T-cell (primary cell): ENCODE measurements at regions of chr12 and their contacts with region 1.

Region 1: DNA sequence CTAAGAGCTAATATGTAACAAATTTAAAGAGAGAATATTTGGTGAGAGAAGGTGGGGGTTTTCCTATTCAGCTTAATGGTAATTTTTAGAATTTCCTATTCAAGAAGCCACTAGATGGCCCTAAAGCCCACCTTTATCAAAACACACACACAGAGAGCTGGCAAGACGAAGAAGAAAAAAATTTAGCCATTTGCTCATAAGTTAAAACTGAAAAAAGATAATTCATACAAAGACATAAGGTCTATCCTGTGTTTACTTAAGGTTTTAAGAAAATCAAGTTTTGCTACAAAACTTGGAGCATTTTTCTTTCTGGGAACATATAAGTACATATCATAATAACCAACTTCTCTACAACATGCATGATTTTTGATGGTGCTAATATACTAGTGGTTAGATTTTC is 46.8 kb upstream of the PCED1B start:
- DNase-seq: peak in 12 of 35 experiments; percentile 4 to 79 (median 16)
- ATAC-seq: peak; percentile 74 to 85 (median 80)
- H3K4me3 ChIP-seq: no peak overlapping the region
- H3K4me3 Mint-ChIP-seq: peak overlapping the region in 1 of 3 donors; percentile 32
- H3K27ac ChIP-seq: no peak overlapping the region
- H3K27ac Mint-ChIP-seq: peak overlapping the region in 1 of 2 donors; percentile 49
- H3K4me1 ChIP-seq: peaks cover 0 to 2% of the 10 kb centered on the region in 2 experiments
- H3K4me1 Mint-ChIP-seq: peaks cover 26 to 28% (median 28%) of the 10 kb centered on the region in 3 donors
- H3K27me3 ChIP-seq: no peaks in the 10 kb centered on the region
- H3K27me3 Mint-ChIP-seq: no peaks in the 10 kb centered on the region

Region 2: GRCh38 chr12:45543906-45544315 is 1488.7 kb before region 1 on chr12:
- CTCF ChIA-PET with region 1: no interaction called
- POLR2A ChIA-PET with region 1: no interaction called
- DNase-seq: peak in 30 of 35 experiments; percentile 5 to 81 (median 34)
- ATAC-seq: peak; percentile 58 to 97 (median 76)
- H3K4me3 ChIP-seq: no peak overlapping the region
- H3K4me3 Mint-ChIP-seq: no peak overlapping the region
- H3K27ac ChIP-seq: no peak overlapping the region
- H3K27ac Mint-ChIP-seq: no peak overlapping the region
- H3K4me1 ChIP-seq: no peaks in the 10 kb centered on the region
- H3K4me1 Mint-ChIP-seq: no peaks in the 10 kb centered on the region
- H3K27me3 ChIP-seq: peaks cover 0 to 7% of the 10 kb centered on the region in 2 experiments
- H3K27me3 Mint-ChIP-seq: peaks cover 0 to 3% of the 10 kb centered on the region in 2 donors

Region 3: DNA sequence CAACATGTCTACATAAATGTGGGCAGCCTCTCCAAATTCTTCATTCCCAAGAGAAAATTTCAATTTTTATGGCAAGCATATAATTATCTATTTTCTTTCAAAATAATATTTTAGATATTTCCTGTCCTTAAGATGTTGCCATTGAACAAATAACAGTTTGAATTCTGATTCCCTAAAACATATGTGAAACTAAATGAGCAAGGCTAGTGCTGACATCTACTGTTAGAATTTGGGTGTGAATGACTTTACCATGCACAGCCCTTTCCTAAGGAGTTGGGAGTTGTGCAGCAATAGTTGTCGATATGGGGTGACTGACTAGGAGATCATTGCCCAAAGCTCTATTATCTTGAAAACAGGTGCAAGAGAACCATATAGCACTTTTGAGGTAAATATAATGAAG is 98.7 kb before region 1 on chr12:
- CTCF ChIA-PET with region 1: no interaction called
- POLR2A ChIA-PET with region 1: no interaction called
- DNase-seq: peak in 1 of 35 experiments; percentile 40
- ATAC-seq: no peak
- H3K4me3 ChIP-seq: no peak overlapping the region
- H3K4me3 Mint-ChIP-seq: no peak overlapping the region
- H3K27ac ChIP-seq: no peak overlapping the region
- H3K27ac Mint-ChIP-seq: no peak overlapping the region
- H3K4me1 ChIP-seq: peaks cover 0 to 6% of the 10 kb centered on the region in 2 experiments
- H3K4me1 Mint-ChIP-seq: no peaks in the 10 kb centered on the region
- H3K27me3 ChIP-seq: peaks cover 0 to 3% of the 10 kb centered on the region in 2 experiments
- H3K27me3 Mint-ChIP-seq: peaks cover 11 to 27% of the 10 kb centered on the region in 2 donors

Region 4: DNA sequence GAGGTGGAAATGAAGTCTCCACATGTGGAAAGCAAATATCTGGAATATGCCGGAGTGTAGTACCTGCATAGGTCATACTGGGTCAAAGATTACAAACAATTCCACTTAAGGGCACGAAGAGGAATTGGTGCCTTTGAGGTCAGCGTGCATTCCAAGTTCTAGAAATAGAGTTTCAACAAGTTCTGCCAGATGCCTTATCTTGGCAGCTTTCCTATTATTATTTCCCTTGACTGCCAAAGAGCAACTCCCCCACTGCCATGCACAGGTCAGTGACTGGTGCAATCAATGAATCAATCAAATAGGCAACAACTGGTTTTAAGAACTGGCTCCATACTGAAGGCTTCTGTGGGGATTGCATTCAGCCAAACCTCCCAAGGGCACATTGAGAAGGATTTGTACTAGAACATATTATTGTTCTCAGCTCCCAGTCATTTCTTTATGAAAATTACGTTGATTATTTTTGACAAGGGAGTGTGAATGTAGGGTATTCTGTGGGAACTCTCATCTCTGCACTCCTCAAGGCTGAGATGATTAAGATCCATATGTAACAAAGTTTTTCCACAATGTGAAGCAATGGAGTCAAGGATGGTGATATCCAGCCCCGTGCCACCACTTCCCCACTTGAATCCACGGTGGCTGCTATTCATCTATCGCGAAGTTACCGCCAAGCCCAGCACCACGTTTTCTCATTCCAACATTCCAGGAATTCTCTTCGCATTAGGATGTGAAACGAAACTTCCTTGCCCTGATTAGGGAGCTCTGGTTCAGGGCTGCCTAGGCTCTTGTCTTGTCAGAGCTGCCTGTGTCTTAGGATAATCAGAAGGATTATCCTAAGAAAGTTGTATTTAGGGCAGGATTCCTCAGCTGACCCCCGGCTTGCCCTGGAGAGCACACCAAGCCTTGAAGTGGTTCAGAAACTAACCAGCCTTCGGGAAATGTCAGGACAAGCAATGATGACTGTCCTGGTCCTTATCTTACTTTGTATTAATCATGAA is 68.4 kb before region 1 on chr12:
- CTCF ChIA-PET with region 1: interaction called in 1 of 2 experiments, 12 read pairs
- POLR2A ChIA-PET with region 1: no interaction called
- DNase-seq: no peak
- ATAC-seq: no peak
- H3K4me3 ChIP-seq: no peak overlapping the region
- H3K4me3 Mint-ChIP-seq: no peak overlapping the region
- H3K27ac ChIP-seq: no peak overlapping the region
- H3K27ac Mint-ChIP-seq: no peak overlapping the region
- H3K4me1 ChIP-seq: no peaks in the 10 kb centered on the region
- H3K4me1 Mint-ChIP-seq: no peaks in the 10 kb centered on the region
- H3K27me3 ChIP-seq: peaks cover 0 to 5% of the 10 kb centered on the region in 2 experiments
- H3K27me3 Mint-ChIP-seq: peaks cover 3 to 10% of the 10 kb centered on the region in 2 donors

Region 5: DNA sequence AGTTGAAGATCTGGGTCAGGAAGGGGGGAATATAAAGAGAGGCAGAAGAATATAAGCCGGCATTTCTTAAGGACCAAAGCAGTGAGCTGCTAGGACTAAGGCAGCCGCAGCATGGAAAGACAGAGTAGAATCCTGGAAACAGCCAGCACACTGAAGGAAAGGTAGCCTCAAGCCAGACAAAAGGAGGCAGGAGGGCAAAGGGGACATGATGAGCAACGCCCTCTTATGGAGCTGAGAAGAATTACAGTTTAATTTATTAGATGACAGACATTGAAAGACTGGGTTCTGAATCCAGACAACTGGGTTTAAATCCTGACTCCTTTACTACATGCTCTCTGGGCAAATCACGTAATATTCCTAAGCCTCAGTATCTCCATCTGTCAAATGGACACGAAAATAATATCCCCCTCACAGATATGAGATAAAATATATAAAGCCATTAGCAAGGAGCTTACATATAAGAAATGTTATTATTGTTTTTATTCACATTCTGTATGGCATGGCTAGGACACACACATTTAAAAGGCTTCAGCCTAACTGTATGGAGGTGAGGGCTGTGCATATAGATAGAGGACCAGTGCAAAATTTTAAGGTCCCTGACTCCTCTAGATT is 38.7 kb after region 1 on chr12:
- CTCF ChIA-PET with region 1: interaction called in 1 of 2 experiments, 15 read pairs
- POLR2A ChIA-PET with region 1: no interaction called
- DNase-seq: peak in 1 of 35 experiments; percentile 52
- ATAC-seq: no peak
- H3K4me3 ChIP-seq: no peak overlapping the region
- H3K4me3 Mint-ChIP-seq: no peak overlapping the region
- H3K27ac ChIP-seq: no peak overlapping the region
- H3K27ac Mint-ChIP-seq: no peak overlapping the region
- H3K4me1 ChIP-seq: no peaks in the 10 kb centered on the region
- H3K4me1 Mint-ChIP-seq: peaks cover 2 to 6% (median 6%) of the 10 kb centered on the region in 3 donors
- H3K27me3 ChIP-seq: no peaks in the 10 kb centered on the region
- H3K27me3 Mint-ChIP-seq: no peaks in the 10 kb centered on the region

Region 6: GRCh38 chr12:47102845-47103651 is 70.4 kb after region 1 on chr12:
- CTCF ChIA-PET with region 1: no interaction called
- POLR2A ChIA-PET with region 1: no interaction called
- DNase-seq: no peak
- ATAC-seq: no peak
- H3K4me3 ChIP-seq: no peak overlapping the region
- H3K4me3 Mint-ChIP-seq: no peak overlapping the region
- H3K27ac ChIP-seq: no peak overlapping the region
- H3K27ac Mint-ChIP-seq: no peak overlapping the region
- H3K4me1 ChIP-seq: no peaks in the 10 kb centered on the region
- H3K4me1 Mint-ChIP-seq: peaks cover 0 to 18% (median 2%) of the 10 kb centered on the region in 3 donors
- H3K27me3 ChIP-seq: no peaks in the 10 kb centered on the region
- H3K27me3 Mint-ChIP-seq: no peaks in the 10 kb centered on the region

Region 7: DNA sequence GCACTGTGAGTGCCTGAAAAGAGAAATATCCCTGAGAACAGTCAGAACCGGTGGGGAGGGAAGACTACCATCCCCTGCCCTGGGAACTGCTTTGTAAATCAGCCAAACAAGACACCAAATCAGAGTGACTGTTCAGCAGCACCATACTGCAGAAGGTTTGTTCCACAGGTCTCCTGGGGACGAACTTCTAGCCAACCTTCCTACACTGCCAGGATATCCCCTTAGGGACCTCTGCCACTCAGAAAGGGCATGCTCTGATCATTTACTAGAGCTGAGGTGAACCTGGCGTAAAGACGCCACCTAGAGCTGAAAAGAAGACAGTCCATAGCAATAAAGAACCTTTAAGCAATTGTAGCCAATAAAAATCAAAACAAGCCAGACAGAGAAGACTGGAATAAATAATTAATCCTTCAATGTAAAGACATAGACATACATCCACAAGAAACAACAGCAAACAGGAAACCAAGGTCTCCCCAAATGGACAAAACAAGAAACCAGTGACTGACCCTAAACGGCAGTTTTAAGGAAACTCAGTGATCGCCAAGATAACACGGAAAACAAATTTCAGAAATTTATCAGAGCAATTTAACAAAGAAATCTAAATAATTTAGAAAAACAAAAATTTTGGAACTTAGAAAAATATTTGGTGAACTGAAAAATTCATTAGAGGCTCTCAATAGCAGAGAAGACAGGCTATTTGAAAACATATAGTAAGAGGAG is 275.2 kb after region 1 on chr12:
- CTCF ChIA-PET with region 1: interaction called, 12 to 34 read pairs
- POLR2A ChIA-PET with region 1: no interaction called
- DNase-seq: peak; percentile 23 to 79 (median 45)
- ATAC-seq: peak; percentile 89 to 96 (median 90)
- H3K4me3 ChIP-seq: peak overlapping the region; percentile 54 to 62
- H3K4me3 Mint-ChIP-seq: peak overlapping the region; percentile 87 to 92 (median 88)
- H3K27ac ChIP-seq: peak overlapping the region; percentile 40
- H3K27ac Mint-ChIP-seq: peak overlapping the region; percentile 96
- H3K4me1 ChIP-seq: peaks cover 0 to 14% of the 10 kb centered on the region in 2 experiments
- H3K4me1 Mint-ChIP-seq: peaks cover 33 to 41% (median 40%) of the 10 kb centered on the region in 3 donors
- H3K27me3 ChIP-seq: no peaks in the 10 kb centered on the region
- H3K27me3 Mint-ChIP-seq: no peaks in the 10 kb centered on the region

Region 8: GRCh38 chr12:47408171-47408871 is 375.7 kb after region 1 on chr12:
- CTCF ChIA-PET with region 1: interaction called, 4 to 10 read pairs
- POLR2A ChIA-PET with region 1: no interaction called
- DNase-seq: peak in 19 of 35 experiments; percentile 6 to 66 (median 31)
- ATAC-seq: peak; percentile 60 to 72 (median 64)
- H3K4me3 ChIP-seq: no peak overlapping the region
- H3K4me3 Mint-ChIP-seq: peak overlapping the region in 1 of 3 donors; percentile 53
- H3K27ac ChIP-seq: no peak overlapping the region
- H3K27ac Mint-ChIP-seq: peak overlapping the region; percentile 69 to 95
- H3K4me1 ChIP-seq: peaks cover 41 to 67% of the 10 kb centered on the region in 2 experiments
- H3K4me1 Mint-ChIP-seq: peaks cover 63 to 78% (median 75%) of the 10 kb centered on the region in 3 donors
- H3K27me3 ChIP-seq: no peaks in the 10 kb centered on the region
- H3K27me3 Mint-ChIP-seq: no peaks in the 10 kb centered on the region